CD4-positive, alpha-beta memory T cell (primary cell): ENCODE measurements at regions of chr3 and their contacts with region 1.

Region 1: DNA sequence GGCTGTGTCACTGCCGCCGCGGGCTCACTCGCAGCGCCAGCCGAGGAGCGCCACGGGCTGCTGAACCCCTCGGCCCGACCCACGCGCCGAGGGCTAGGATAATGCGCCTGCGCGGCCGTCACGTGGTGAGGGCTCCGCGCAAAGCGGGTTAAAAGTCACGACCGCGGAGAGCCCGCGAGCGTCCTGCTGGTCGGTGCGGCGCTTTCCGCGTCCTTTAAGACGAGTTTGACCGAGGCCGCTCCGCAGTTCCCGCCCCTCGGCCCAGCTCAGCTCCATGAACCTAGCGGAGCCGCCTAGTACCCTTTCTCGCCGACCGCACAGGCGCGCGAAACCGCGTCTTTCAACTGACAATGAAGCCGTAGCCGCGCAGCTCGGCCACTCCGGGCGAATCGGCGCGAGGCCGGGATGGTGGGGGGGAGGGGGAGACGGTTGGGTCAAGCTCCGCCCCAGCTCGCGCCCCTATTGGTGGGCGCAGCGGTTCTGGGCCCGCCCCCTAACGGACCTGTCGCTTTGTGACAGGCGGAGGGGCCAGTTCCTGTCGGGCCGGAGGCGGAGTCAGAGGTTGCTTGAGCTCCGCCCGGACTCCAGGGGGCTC is 636 bp upstream of the STT3B start:
- DNase-seq: peak; percentile 98
- H3K4me3 ChIP-seq: peak overlapping the region; percentile 9 to 84
- H3K4me3 Mint-ChIP-seq: peak overlapping the region in 7 of 8 donors; percentile 92 to 99 (median 98)
- H3K27ac ChIP-seq: peak overlapping the region; percentile 88
- H3K27ac Mint-ChIP-seq: peak overlapping the region in 6 of 7 donors; percentile 97 to 99 (median 98)
- H3K4me1 ChIP-seq: peaks cover 31% of the 10 kb centered on the region
- H3K4me1 Mint-ChIP-seq: peaks cover 9 to 33% (median 16%) of the 10 kb centered on the region in 4 donors
- H3K27me3 ChIP-seq: no peaks in the 10 kb centered on the region
- H3K27me3 Mint-ChIP-seq: no peaks in the 10 kb centered on the region

Region 2: DNA sequence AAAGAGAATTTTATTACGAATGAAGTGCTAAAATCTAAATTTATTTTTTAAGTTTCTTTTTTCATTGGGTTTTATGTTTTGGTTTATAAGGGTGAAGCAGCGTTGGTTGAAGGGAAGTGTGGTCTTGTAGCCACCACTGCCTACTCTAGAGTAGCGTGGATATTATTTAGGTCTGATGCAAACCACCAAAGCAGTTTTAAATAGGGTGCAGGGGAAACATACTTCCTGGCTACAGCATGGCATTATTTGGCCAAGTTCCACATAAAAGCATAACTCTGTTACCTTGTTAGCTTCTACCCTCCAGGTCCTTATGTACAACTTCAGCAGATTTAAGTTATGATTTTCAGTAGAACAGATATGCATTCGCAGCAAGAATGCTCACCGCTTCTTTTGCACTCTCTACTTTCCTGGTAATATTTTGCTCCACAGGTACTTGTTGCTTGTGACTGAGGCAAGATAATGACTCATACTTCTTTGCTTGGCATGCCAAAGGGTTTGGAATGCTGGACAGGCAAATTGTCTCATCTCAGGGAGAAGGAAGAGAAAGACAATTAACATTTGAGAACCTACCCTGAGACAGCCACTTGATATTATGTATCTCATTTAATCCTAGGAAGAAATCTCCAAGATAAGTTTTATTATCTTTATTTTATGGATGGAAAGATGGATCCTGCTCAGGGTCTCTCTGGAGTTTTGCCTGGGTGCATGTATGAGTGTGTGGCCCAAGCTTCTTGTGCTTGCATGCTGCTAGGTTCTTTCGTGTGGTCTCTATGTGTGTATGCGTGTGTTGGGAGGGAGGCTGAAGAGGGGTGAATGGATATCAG is 920.3 kb before region 1 on chr3:
- CTCF ChIA-PET with region 1: no interaction called
- POLR2A ChIA-PET with region 1: interaction called, 15 read pairs
- intact Hi-C with region 1: loop called (anchors 2 kb)
- DNase-seq: peak in 4 of 5 donors; percentile 47 to 57 (median 50)
- H3K4me3 ChIP-seq: peak overlapping the region in 1 of 2 donors; percentile 14
- H3K4me3 Mint-ChIP-seq: peak overlapping the region; percentile 90 to 99 (median 98)
- H3K27ac ChIP-seq: peak overlapping the region; percentile 72
- H3K27ac Mint-ChIP-seq: peak overlapping the region; percentile 88 to 96 (median 93)
- H3K4me1 ChIP-seq: peaks cover 75% of the 10 kb centered on the region
- H3K4me1 Mint-ChIP-seq: peaks cover 66 to 84% (median 70%) of the 10 kb centered on the region in 4 donors
- H3K27me3 ChIP-seq: no peaks in the 10 kb centered on the region
- H3K27me3 Mint-ChIP-seq: no peaks in the 10 kb centered on the region

Region 3: GRCh38 chr3:31213869-31214486 is 318.1 kb before region 1 on chr3:
- CTCF ChIA-PET with region 1: no interaction called
- POLR2A ChIA-PET with region 1: interaction called, 36 read pairs
- intact Hi-C with region 1: loop called (anchors 5 kb)
- DNase-seq: peak; percentile 73 to 87 (median 82)
- H3K4me3 ChIP-seq: no peak overlapping the region
- H3K4me3 Mint-ChIP-seq: peak overlapping the region; percentile 53 to 89 (median 78)
- H3K27ac ChIP-seq: no peak overlapping the region
- H3K27ac Mint-ChIP-seq: peak overlapping the region; percentile 54 to 96 (median 81)
- H3K4me1 ChIP-seq: peaks cover 88% of the 10 kb centered on the region
- H3K4me1 Mint-ChIP-seq: peaks cover 82 to 100% (median 93%) of the 10 kb centered on the region in 4 donors
- H3K27me3 ChIP-seq: no peaks in the 10 kb centered on the region
- H3K27me3 Mint-ChIP-seq: no peaks in the 10 kb centered on the region

Region 4: DNA sequence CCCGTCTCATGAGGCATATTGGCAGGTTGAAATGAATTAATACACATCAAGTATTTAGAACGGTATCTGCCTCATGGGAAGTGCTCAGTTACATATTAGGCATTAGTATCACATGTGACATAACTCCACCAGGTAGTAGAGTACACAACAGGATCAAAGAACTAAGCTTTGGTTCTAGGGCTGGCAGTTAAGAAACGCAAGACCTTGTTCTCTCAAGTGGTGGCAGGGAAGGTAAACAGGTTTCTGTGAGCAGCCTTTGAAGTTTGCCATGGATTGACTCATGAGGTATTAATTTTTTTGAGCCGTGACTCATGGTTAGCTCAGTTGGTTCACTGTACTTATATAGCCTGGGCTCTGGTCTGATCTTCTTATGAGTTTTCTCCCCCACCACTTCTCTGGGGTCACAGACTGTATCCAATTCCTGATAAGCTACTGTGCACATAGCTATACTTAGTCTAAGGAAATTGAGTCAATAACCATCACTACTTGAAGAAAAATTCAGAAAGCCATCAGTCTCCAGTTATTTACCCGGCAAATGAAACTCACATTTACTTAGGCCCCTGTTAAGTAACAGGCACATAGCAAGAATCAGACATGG is 154.9 kb before region 1 on chr3:
- CTCF ChIA-PET with region 1: interaction called, 3 read pairs
- POLR2A ChIA-PET with region 1: interaction called, 11 read pairs
- intact Hi-C with region 1: loop called (anchors 5 kb)
- DNase-seq: peak; percentile 47 to 68 (median 59)
- H3K4me3 ChIP-seq: no peak overlapping the region
- H3K4me3 Mint-ChIP-seq: no peak overlapping the region
- H3K27ac ChIP-seq: no peak overlapping the region
- H3K27ac Mint-ChIP-seq: peak overlapping the region in 4 of 7 donors; percentile 19 to 49 (median 33)
- H3K4me1 ChIP-seq: peaks cover 13% of the 10 kb centered on the region
- H3K4me1 Mint-ChIP-seq: peaks cover 11 to 21% (median 15%) of the 10 kb centered on the region in 4 donors
- H3K27me3 ChIP-seq: no peaks in the 10 kb centered on the region
- H3K27me3 Mint-ChIP-seq: no peaks in the 10 kb centered on the region

Region 5: DNA sequence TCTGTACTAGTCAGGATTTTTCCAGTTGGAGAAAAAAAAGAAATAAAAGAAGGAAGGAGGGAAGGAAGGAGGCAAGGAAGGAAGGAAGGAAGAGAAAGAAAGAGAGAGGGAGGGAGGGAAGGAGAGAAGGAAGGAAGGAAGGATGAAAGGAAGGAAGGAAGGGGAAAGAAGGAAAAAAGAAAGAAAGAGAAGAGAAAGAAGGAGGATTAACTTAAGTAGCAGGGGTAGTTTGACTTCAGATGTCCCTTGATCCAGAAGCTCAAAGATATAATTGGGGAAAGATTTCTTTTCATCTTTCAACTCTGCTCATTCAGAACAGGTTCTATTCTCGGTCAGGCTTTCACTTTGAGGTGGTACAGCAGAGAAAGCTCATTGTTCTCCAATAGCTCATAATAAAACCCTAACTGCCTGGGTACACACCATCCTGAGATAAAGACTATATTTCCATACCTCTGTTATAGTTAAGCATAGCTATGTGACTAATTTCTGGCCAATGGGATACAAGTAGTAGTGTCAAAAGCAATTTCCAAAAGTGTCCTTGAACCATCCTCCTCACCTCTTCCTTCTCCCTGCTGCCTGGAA is 22.9 kb before region 1 on chr3:
- CTCF ChIA-PET with region 1: interaction called, 5 read pairs
- POLR2A ChIA-PET with region 1: interaction called, 15 read pairs
- intact Hi-C with region 1: no loop called
- DNase-seq: no peak
- H3K4me3 ChIP-seq: no peak overlapping the region
- H3K4me3 Mint-ChIP-seq: peak overlapping the region in 5 of 8 donors; percentile 21 to 75 (median 68)
- H3K27ac ChIP-seq: no peak overlapping the region
- H3K27ac Mint-ChIP-seq: peak overlapping the region; percentile 4 to 85 (median 67)
- H3K4me1 ChIP-seq: peaks cover 54% of the 10 kb centered on the region
- H3K4me1 Mint-ChIP-seq: peaks cover 37 to 58% (median 45%) of the 10 kb centered on the region in 4 donors
- H3K27me3 ChIP-seq: no peaks in the 10 kb centered on the region
- H3K27me3 Mint-ChIP-seq: no peaks in the 10 kb centered on the region

Region 6: DNA sequence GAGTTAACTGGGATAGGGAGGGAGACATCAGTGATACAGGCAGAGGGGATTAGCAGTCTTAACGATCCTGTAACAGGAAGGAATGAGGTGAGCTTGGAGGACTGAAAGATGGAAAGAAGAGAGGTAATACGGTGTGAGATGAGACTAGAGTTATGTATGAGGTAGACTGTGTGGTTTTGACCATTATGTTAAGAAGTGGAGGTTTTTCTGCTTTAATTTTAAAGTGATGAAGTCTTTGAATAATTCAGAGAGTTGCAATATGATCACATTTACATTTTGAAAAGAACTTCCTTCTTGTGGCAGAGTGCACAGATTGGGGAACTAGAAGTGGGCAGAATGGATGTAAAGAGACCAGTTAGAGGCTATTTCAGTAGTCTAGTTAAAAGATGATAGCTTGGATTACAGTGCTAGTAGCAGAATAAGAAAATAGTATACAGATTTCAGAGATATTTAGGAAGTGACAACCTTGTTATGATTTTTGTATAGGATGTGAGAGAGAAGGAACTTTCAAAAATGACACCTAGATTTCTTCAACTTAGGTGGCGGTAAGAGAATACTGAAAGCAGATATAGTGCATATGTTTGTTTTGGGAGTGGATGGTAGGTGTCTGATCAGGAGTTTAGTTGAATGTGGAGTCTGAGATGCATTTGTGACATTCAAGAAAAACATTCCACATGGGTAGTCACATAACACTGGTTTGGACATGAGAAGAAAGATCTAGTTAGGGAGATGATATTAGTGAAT is 41.1 kb after region 1 on chr3:
- CTCF ChIA-PET with region 1: interaction called, 3 read pairs
- POLR2A ChIA-PET with region 1: interaction called, 14 read pairs
- intact Hi-C with region 1: no loop called
- DNase-seq: no peak
- H3K4me3 ChIP-seq: no peak overlapping the region
- H3K4me3 Mint-ChIP-seq: no peak overlapping the region
- H3K27ac ChIP-seq: no peak overlapping the region
- H3K27ac Mint-ChIP-seq: no peak overlapping the region
- H3K4me1 ChIP-seq: peaks cover 92% of the 10 kb centered on the region
- H3K4me1 Mint-ChIP-seq: peaks cover 32 to 60% (median 45%) of the 10 kb centered on the region in 4 donors
- H3K27me3 ChIP-seq: no peaks in the 10 kb centered on the region
- H3K27me3 Mint-ChIP-seq: no peaks in the 10 kb centered on the region

Region 7: DNA sequence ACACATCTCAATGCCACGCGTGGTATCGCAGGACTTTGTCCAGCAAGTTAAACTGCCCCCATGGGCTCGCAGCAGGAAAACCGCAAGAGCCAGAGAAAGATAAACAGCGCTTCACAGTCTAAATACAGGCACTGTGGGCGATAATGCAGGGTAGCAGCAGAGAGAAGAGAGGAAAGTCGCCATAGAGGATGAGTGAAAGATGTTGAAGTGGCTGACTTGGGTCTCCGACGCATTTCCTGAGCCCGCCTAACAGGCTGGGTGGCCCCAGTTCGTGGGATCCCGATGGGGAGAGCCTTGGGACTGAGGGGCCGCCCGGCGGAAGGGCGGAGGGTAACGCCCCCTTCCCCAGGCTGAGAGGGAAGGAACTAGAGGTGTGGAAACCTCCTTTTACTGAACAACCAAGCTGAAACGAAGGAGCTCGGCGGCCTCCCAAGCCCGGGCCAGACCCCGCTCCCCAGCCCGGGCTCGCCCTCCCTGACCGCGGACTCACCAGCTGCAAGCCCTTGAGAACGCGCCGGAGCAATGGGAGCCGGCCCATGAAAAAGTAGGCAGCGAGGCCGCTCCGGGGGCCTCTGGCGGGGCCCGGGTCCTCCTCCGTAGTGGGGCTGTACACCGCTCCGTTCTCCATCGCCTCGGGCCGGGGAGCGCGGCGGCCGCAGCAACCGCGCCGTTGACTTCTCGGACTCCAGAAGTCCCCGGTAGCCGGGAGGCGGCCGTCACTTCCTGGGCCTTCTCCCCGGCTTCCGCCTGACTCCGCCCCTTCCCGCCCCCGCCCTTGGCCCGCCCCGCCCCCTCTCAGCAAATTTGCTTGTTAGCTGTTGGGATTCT is 970.2 kb after region 1 on chr3 and contains the start of gene CMTM6:
- CTCF ChIA-PET with region 1: no interaction called
- POLR2A ChIA-PET with region 1: no interaction called
- intact Hi-C with region 1: loop called (anchors 10 kb)
- DNase-seq: peak; percentile 69 to 80 (median 74)
- H3K4me3 ChIP-seq: peak within 1 kb of the TSS; percentile 82 to 89
- H3K4me3 Mint-ChIP-seq: peak within 1 kb of the TSS; percentile 91 to 99 (median 96)
- H3K27ac ChIP-seq: peak within 1 kb of the TSS; percentile 98
- H3K27ac Mint-ChIP-seq: peak within 1 kb of the TSS; percentile 77 to 99 (median 98)
- H3K4me1 ChIP-seq: peaks cover 46% of the 10 kb centered on the region
- H3K4me1 Mint-ChIP-seq: peaks cover 24 to 51% (median 36%) of the 10 kb centered on the region in 4 donors
- H3K27me3 ChIP-seq: no peaks in the 10 kb centered on the region
- H3K27me3 Mint-ChIP-seq: no peaks in the 10 kb centered on the region
- total RNA-seq, gene CMTM6: 30.3 to 34.8 TPM